ENCODE measurements at regions of chr12 and their contacts with region 1.

Region 1: GRCh38 chr12:2583091-2583497 is 211.7 kb upstream of the FKBP4 start:
- DNase-seq: peak; percentile 73 to 92 (median 90)
- ATAC-seq: peak; percentile 85 to 87
- H3K4me3 ChIP-seq: no peak overlapping the region
- H3K27ac ChIP-seq: no peak overlapping the region
- H3K4me1 ChIP-seq: no peaks in the 10 kb centered on the region
- H3K27me3 ChIP-seq: no peaks in the 10 kb centered on the region

Region 2: GRCh38 chr12:2049604-2050540 is 533.2 kb before region 1 on chr12:
- intact Hi-C with region 1: loop called in 1 of 4 experiments (anchors 10 kb)
- DNase-seq: no peak
- ATAC-seq: no peak
- H3K4me3 ChIP-seq: no peak overlapping the region
- H3K27ac ChIP-seq: no peak overlapping the region
- H3K4me1 ChIP-seq: no peaks in the 10 kb centered on the region
- H3K27me3 ChIP-seq: no peaks in the 10 kb centered on the region